ENCODE measurements at regions of chr6 and their contacts with region 1.

Region 1: GRCh38 chr6:137811121-137811915 is 55.7 kb upstream of the TNFAIP3 start:
- DNase-seq: peak; percentile 94
- H3K4me3 Mint-ChIP-seq: peak overlapping the region; percentile 2
- H3K27ac Mint-ChIP-seq: peak overlapping the region; percentile 55
- H3K4me1 Mint-ChIP-seq: peaks cover 55% of the 10 kb centered on the region
- H3K27me3 Mint-ChIP-seq: no peaks in the 10 kb centered on the region

Region 2: DNA sequence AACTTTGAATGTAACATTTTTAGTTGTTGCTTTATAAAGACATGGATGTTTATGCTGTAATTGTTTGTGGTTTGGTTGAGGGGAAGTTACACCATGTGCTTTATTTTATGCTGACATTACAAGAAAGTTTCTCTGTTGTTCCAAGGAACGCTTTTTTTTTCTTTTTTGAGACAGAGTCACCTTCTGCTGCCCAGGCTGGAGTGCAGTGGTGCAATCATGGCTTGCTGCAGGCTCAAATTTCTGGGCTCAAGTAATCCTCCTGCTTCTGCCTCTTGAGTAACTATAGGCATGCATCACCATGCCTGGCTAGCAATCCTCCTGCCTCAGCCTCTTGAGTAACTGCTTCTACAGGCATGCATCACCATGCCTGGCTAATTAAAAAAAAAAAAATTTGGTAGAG is 571.1 kb before region 1 on chr6:
- intact Hi-C with region 1: no loop called
- DNase-seq: no peak
- H3K4me3 Mint-ChIP-seq: no peak overlapping the region
- H3K27ac Mint-ChIP-seq: no peak overlapping the region
- H3K4me1 Mint-ChIP-seq: peaks cover 8% of the 10 kb centered on the region
- H3K27me3 Mint-ChIP-seq: peaks cover 4% of the 10 kb centered on the region

Region 3: GRCh38 chr6:137799950-137800568 is 11.3 kb before region 1 on chr6:
- intact Hi-C with region 1: loop called (anchors 1 kb)
- DNase-seq: peak; percentile 83
- H3K4me3 Mint-ChIP-seq: peak overlapping the region; percentile 18
- H3K27ac Mint-ChIP-seq: peak overlapping the region; percentile 81
- H3K4me1 Mint-ChIP-seq: peaks cover 54% of the 10 kb centered on the region
- H3K27me3 Mint-ChIP-seq: no peaks in the 10 kb centered on the region

Measured in activated CD4-positive, alpha-beta T cell treated with anti-CD3 and anti-CD28 coated beads, Interleukin-2, amount 10 ng/mL, durations not matched to agents 24 days and 14 days (primary cell).